ENCODE measurements at regions of chr20 and their contacts with region 1.

Region 1: DNA sequence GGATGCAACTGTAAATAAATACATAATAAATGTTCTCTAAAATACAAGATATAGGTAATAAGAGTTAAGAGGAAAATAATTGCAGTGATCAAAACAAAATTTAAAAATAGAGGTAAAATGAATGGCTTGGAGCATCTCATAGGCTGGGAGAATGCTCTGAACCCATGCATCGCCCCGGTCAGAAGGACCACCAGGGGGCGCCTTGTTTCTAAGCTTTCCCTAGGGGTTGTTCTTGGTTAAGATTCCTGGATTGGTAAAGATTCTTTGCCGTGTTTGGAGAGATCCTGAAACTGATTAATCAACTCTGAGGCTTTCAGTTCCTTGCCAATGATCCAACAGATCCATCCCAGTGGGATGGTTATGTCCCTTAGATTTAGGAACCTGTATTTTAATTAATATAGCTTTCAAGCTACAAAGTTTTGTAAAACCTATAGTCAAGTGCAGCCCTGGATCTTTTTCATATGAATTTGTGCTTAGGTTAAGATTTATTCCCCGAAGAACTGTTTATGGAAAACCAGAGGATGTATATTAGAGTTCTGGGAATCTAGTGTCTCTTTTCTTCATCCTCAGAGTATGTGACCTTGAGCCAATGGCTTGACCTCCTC is 45.3 kb upstream of the PRELID3B start:
- DNase-seq: peak; percentile 79 to 91
- ATAC-seq: peak; percentile 87 to 90 (median 89)
- H3K4me3 ChIP-seq: no peak overlapping the region
- H3K4me3 Mint-ChIP-seq: no peak overlapping the region
- H3K27ac ChIP-seq: no peak overlapping the region
- H3K27ac Mint-ChIP-seq: no peak overlapping the region
- H3K4me1 ChIP-seq: no peaks in the 10 kb centered on the region
- H3K4me1 Mint-ChIP-seq: no peaks in the 10 kb centered on the region
- H3K27me3 ChIP-seq: no peaks in the 10 kb centered on the region
- H3K27me3 Mint-ChIP-seq: peaks cover 9 to 12% of the 10 kb centered on the region in 2 donors
- CTCF ChIP-seq: peak; percentile 98

Region 2: DNA sequence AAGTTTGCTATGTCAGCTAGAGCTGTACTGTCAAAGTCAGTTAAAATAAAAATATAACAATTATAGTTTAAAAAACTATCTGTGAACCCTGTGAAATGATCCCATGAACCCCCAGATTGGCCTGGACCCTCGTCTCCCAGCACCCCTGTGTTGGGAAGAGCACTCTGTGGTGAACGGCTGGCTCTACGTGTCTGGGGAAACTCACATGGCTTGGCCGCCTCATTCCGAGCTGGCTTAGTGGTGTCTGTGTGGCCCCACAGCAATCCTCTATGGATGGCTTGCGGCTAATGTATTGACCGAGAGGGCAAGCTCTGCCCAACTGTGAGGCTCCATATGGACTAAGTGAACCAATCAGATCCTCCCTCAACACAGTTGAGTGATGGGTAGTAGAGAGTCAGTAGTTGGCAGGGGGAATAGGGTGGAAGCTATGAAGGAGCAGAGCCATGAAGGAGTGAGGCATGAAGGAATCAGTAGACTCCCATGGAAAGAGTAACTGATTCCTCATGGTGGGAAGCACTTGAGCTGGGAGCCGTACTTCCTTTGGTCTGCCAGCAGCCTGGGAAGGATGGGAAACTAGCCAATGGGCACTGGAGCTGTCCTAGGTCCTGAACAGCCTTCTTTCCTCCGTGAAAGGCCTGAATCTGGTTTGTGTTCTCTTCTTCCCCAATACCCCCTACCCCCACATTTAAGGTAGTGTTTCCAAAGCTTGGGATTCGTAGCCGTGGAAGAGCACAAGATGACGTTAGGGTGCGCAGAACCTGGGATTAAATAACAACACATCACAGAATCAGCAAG is 54.1 kb after region 1 on chr20:
- intact Hi-C with region 1: no loop called
- DNase-seq: peak in 1 of 2 donors; percentile 52
- ATAC-seq: no peak
- H3K4me3 ChIP-seq: no peak overlapping the region
- H3K4me3 Mint-ChIP-seq: no peak overlapping the region
- H3K27ac ChIP-seq: no peak overlapping the region
- H3K27ac Mint-ChIP-seq: no peak overlapping the region
- H3K4me1 ChIP-seq: peaks cover 32% of the 10 kb centered on the region
- H3K4me1 Mint-ChIP-seq: peaks cover 31 to 32% of the 10 kb centered on the region in 2 donors
- H3K27me3 ChIP-seq: no peaks in the 10 kb centered on the region
- H3K27me3 Mint-ChIP-seq: no peaks in the 10 kb centered on the region
- CTCF ChIP-seq: no peak

Region 3: GRCh38 chr20:59207742-59208357 is 119.9 kb after region 1 on chr20:
- intact Hi-C with region 1: loop called (anchors 1 kb)
- DNase-seq: peak; percentile 71 to 92
- ATAC-seq: peak; percentile 88 to 99 (median 98)
- H3K4me3 ChIP-seq: no peak overlapping the region
- H3K4me3 Mint-ChIP-seq: peak overlapping the region; percentile 40
- H3K27ac ChIP-seq: no peak overlapping the region
- H3K27ac Mint-ChIP-seq: peak overlapping the region; percentile 81 to 86
- H3K4me1 ChIP-seq: peaks cover 32% of the 10 kb centered on the region
- H3K4me1 Mint-ChIP-seq: peaks cover 41 to 42% of the 10 kb centered on the region in 2 donors
- H3K27me3 ChIP-seq: no peaks in the 10 kb centered on the region
- H3K27me3 Mint-ChIP-seq: no peaks in the 10 kb centered on the region
- CTCF ChIP-seq: peak; percentile 84

Region 4: GRCh38 chr20:59222253-59223181 is 134.6 kb after region 1 on chr20:
- intact Hi-C with region 1: loop called (anchors 1 kb)
- DNase-seq: peak; percentile 79 to 87
- ATAC-seq: peak; percentile 90 to 98 (median 96)
- H3K4me3 ChIP-seq: peak overlapping the region; percentile 34
- H3K4me3 Mint-ChIP-seq: peak overlapping the region; percentile 93
- H3K27ac ChIP-seq: peak overlapping the region; percentile 12
- H3K27ac Mint-ChIP-seq: peak overlapping the region; percentile 73 to 76
- H3K4me1 ChIP-seq: peaks cover 17% of the 10 kb centered on the region
- H3K4me1 Mint-ChIP-seq: peaks cover 30 to 33% of the 10 kb centered on the region in 2 donors
- H3K27me3 ChIP-seq: no peaks in the 10 kb centered on the region
- H3K27me3 Mint-ChIP-seq: no peaks in the 10 kb centered on the region
- CTCF ChIP-seq: peak; percentile 96